ENCODE measurements at regions of chr17 and their contacts with region 1.

Region 1: GRCh38 chr17:64081802-64082799 is 47.8 kb downstream of the ERN1 start:
- DNase-seq: peak in 4 of 5 donors; percentile 31 to 65 (median 42)
- H3K4me3 ChIP-seq: peak overlapping the region; percentile 30
- H3K4me3 Mint-ChIP-seq: peak overlapping the region in 2 of 7 donors; percentile 42 to 82
- H3K27ac ChIP-seq: peak overlapping the region; percentile 40
- H3K27ac Mint-ChIP-seq: peak overlapping the region in 1 of 8 donors; percentile 27
- H3K4me1 ChIP-seq: peaks cover 67% of the 10 kb centered on the region
- H3K4me1 Mint-ChIP-seq: peaks cover 7 to 29% (median 26%) of the 10 kb centered on the region in 3 donors
- H3K27me3 ChIP-seq: no peaks in the 10 kb centered on the region
- H3K27me3 Mint-ChIP-seq: no peaks in the 10 kb centered on the region

Region 2: DNA sequence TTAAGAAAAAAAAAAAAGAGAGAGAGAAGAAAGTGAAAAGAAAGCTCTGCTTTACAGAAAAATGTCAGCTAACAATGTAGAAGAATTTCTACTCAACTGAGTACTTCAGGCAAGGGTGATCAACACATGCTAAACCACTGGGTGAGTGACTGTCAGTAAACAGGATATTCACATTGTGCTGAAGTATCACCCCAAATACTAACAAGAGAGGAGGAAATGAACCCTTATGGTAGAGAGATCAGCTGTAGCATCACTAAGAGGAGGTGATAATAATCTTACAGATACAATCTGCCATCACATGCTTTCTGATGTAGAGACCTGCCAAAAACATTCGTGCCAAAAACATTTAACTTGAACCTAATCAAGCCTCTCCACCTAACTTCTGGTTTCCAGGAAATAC is 30.9 kb before region 1 on chr17:
- CTCF ChIA-PET with region 1: interaction called, 13 read pairs
- POLR2A ChIA-PET with region 1: interaction called, 5 read pairs
- DNase-seq: peak in 2 of 5 donors; percentile 53 to 66
- H3K4me3 ChIP-seq: peak overlapping the region; percentile 35
- H3K4me3 Mint-ChIP-seq: peak overlapping the region in 6 of 7 donors; percentile 21 to 84 (median 70)
- H3K27ac ChIP-seq: peak overlapping the region; percentile 38
- H3K27ac Mint-ChIP-seq: peak overlapping the region; percentile 61 to 96 (median 92)
- H3K4me1 ChIP-seq: peaks cover 45% of the 10 kb centered on the region
- H3K4me1 Mint-ChIP-seq: peaks cover 47 to 65% (median 60%) of the 10 kb centered on the region in 3 donors
- H3K27me3 ChIP-seq: no peaks in the 10 kb centered on the region
- H3K27me3 Mint-ChIP-seq: no peaks in the 10 kb centered on the region

Region 3: DNA sequence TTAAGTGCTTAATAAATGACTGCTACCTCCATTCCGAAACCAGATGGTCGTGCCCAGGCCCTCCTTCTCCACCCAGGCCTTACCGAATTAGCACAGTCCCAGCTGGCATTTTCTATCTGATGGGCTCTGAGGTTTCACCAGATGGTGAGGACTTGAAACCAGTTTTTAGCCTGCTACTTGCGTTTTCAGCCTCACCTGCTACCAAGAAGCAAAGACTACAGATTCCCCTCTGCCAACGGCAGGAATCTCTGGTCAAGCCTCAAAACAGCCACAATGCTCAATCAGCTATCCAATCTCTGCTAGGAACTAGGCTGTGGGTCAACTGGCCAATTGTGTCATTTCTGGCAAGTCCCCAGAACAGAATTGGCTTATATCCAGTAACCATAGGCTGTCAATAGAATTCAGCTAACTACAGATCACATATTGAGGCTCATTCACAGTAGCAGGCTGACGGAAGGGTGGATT is 296.8 kb after region 1 on chr17:
- CTCF ChIA-PET with region 1: no interaction called
- POLR2A ChIA-PET with region 1: no interaction called
- DNase-seq: no peak
- H3K4me3 ChIP-seq: no peak overlapping the region
- H3K4me3 Mint-ChIP-seq: no peak overlapping the region
- H3K27ac ChIP-seq: no peak overlapping the region
- H3K27ac Mint-ChIP-seq: peak overlapping the region in 4 of 8 donors; percentile 48 to 79 (median 68)
- H3K4me1 ChIP-seq: no peaks in the 10 kb centered on the region
- H3K4me1 Mint-ChIP-seq: peaks cover 13 to 46% (median 29%) of the 10 kb centered on the region in 3 donors
- H3K27me3 ChIP-seq: no peaks in the 10 kb centered on the region
- H3K27me3 Mint-ChIP-seq: no peaks in the 10 kb centered on the region